Sigmoid colon (tissue), 7 donors: ENCODE measurements at regions of chr17 and their contacts with region 1.

Region 1: GRCh38 chr17:30236766-30237165 is 1.3 kb upstream of the SLC6A4 start:
- DNase-seq: no peak
- H3K4me3 ChIP-seq: no peak overlapping the region
- H3K27ac ChIP-seq: no peak overlapping the region
- H3K4me1 ChIP-seq: peaks cover 0 to 33% (median 27%) of the 10 kb centered on the region in 4 donors
- H3K27me3 ChIP-seq: peaks cover 26 to 66% (median 44%) of the 10 kb centered on the region in 3 donors
- CTCF ChIP-seq: peak in 1 of 4 experiments; percentile 12
- EP300 ChIP-seq: no peak
- POLR2A ChIP-seq: no peak

Region 2: DNA sequence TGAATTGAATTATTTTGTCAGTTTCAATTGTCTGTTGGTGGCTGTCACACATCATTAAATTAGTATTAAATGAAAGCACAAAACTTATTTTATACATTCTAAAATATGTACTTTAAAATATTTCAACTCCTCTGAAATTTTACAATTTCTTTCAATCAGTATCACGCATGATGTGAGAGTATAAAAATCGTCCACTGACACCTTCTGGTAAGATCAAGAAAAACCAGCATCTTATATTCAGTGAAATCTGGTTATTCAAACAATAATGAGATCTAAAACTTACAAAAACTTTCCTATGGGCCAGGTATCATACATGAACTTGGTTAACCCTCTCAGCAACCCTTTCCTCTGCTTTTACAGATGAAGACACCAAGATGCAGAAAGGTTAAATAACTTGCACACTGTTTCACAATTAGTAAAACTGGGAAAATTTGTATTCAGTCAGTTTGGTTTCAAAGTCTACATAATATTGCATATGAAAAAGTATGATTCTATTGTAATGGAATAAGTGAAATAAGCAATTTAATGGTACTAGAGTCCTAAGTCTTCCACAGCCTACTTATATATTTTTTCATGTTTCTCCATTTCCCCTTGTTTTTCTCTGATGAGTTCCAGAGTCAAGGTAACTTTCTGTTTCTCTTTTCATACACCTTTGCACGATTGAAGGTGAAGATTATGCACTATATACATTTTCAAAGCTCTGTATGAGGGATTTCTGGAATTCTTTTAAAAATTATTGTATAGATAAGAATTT is 236.6 kb before region 1 on chr17:
- intact Hi-C with region 1: no loop called
- DNase-seq: no peak
- H3K4me3 ChIP-seq: no peak overlapping the region
- H3K27ac ChIP-seq: no peak overlapping the region
- H3K4me1 ChIP-seq: no peaks in the 10 kb centered on the region
- H3K27me3 ChIP-seq: no peaks in the 10 kb centered on the region
- CTCF ChIP-seq: no peak
- EP300 ChIP-seq: no peak
- POLR2A ChIP-seq: no peak

Region 3: DNA sequence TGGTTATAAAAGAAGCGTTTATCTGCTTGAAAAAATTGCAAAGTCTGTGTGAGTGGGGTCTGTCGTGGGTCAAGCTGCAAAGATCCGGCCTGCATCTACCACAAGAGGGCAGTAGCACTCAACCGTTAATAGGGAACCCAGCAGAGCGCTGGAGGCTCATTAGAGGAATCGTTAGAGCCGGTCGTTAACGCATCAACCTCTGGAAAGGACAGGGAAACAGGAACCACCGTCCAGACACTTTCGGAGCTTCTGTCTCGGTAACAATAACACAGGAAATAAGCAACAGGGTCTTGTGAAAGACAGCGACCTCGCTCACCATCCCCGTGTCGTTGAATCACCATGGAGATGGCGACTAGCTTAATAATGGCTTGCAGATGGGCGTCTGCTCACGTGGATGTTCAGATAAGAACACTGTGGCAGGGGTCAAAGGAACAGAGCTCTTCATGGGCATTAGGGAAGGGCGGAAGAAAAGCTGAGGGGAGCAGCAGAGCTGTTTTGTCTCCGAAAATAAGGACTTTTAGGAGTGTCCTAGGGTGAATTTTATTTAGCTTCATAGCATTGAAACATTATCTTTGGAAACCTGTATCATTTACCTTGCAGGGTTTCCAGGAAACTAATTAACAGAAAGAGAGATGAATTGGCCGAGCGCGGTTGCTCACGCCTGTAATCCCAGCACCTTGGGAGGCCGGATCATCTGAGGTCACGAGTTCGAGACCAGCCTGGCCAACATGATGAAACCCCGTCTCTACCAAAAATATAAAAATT is 132.0 kb before region 1 on chr17:
- intact Hi-C with region 1: loop called (anchors 2 kb)
- DNase-seq: peak; percentile 86
- H3K4me3 ChIP-seq: peak overlapping the region in 3 of 4 donors; percentile 30 to 44 (median 38)
- H3K27ac ChIP-seq: peak overlapping the region in 3 of 4 donors; percentile 21 to 26 (median 22)
- H3K4me1 ChIP-seq: peaks cover 0 to 5% (median 0%) of the 10 kb centered on the region in 4 donors
- H3K27me3 ChIP-seq: no peaks in the 10 kb centered on the region
- CTCF ChIP-seq: peak; percentile 51 to 88 (median 74)
- EP300 ChIP-seq: no peak
- POLR2A ChIP-seq: no peak

Region 4: DNA sequence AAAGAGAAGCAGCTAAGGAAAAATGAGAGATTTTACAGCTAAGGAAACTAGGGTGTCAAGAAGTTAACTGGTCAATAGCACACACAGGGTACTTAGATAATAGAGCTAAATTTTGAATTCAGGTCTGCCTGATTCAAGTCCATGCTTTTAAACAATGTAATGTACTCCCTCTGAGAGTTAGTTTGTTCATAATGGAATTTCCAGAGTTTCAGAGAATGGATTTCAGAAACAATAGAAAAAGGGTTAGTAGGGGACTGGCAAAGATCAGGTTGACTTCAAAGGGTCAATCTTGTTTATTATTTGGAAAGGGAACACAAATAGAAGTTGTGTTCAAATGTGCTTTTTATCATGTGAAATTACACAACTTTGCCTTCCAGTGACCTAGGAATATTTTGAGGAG is 102.2 kb before region 1 on chr17:
- intact Hi-C with region 1: loop called (anchors 5 kb)
- DNase-seq: no peak
- H3K4me3 ChIP-seq: no peak overlapping the region
- H3K27ac ChIP-seq: no peak overlapping the region
- H3K4me1 ChIP-seq: peaks cover 0 to 12% (median 0%) of the 10 kb centered on the region in 4 donors
- H3K27me3 ChIP-seq: no peaks in the 10 kb centered on the region
- CTCF ChIP-seq: no peak
- EP300 ChIP-seq: no peak
- POLR2A ChIP-seq: no peak

Region 5: DNA sequence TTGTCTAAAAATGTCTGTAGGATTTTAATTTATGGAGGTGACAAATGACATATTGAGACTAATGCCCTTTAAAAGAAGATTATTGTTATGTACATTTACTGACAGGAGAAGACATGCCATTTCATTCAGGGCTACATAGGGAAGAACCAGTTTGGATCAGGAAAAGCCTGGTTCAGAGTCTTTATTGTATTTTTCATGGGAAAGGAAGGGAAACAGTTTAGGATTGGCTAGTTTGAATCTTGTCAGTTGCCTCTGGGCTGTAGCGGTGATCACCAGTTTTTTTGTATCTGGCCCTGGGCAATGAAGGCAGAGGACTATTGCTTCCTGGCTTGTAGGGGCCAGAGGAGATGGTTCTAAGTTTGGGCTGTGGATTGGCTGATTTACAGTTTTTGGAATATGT is 88.4 kb before region 1 on chr17:
- intact Hi-C with region 1: no loop called
- DNase-seq: no peak
- H3K4me3 ChIP-seq: no peak overlapping the region
- H3K27ac ChIP-seq: no peak overlapping the region
- H3K4me1 ChIP-seq: peaks cover 0 to 7% (median 2%) of the 10 kb centered on the region in 4 donors
- H3K27me3 ChIP-seq: no peaks in the 10 kb centered on the region
- CTCF ChIP-seq: no peak
- EP300 ChIP-seq: no peak
- POLR2A ChIP-seq: no peak

Region 6: DNA sequence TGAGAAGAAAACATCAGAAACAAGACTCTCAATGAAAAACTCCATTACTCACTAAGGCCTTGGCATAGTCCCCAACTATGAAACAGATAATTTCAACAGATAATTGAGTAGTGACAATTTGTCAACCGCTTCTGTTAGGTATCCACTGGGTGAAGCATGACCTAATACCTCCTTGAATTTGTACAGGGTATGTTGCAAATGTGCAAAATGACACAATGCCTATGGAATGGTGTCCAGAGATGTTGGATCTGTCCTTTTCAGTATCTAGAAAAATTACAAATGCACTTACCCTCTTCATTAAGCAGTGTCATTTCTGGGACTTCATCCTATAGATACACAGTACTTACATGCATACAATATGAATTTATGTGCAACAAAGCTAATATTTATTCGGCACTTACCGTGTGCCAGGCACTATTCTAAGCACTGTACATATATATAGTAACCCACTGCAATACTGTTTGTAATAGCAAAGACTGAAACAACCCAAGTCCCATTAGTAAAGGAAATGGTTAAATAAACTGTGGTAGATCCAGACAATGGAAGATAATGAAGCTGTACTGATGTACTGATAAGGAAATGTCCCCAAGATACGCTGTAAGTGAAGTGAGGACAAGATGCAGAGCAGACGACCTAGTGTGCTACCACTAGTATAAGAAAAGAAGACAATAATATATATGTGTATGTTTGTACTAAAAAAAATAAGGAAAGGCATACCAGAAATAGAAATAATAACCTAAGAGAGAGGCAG is 20.2 kb after region 1 on chr17:
- intact Hi-C with region 1: no loop called
- DNase-seq: no peak
- H3K4me3 ChIP-seq: no peak overlapping the region
- H3K27ac ChIP-seq: no peak overlapping the region
- H3K4me1 ChIP-seq: no peaks in the 10 kb centered on the region
- H3K27me3 ChIP-seq: no peaks in the 10 kb centered on the region
- CTCF ChIP-seq: no peak
- EP300 ChIP-seq: no peak
- POLR2A ChIP-seq: no peak